ENCODE measurements at regions of chr3 and their contacts with region 1.

Region 1: DNA sequence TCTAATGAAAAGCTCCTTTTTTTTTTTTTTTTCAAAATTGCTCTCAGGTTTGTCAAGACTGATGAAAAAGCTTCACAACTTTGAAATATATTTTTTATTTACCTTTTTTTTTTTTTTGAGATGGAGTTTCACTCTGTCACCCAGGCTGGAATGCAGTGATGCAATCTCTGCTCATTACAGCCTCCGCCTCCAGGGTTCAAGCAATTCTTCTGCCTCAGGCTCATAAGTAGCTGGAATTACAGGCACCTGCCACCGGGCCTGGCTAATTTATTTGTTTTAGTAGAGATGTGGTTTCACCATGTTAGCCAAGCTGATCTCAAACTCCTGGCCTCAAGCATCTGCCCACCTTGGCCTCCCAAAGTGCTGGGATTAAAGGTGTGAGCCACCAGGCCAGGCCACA is 1515.0 kb downstream of the OTOL1 start:
- DNase-seq: peak in 1 of 2 experiments; percentile 16
- H3K4me3 ChIP-seq: no peak overlapping the region
- H3K27ac ChIP-seq: no peak overlapping the region
- H3K4me1 ChIP-seq: no peaks in the 10 kb centered on the region
- H3K27me3 ChIP-seq: no peaks in the 10 kb centered on the region
- CTCF ChIP-seq: no peak

Region 2: DNA sequence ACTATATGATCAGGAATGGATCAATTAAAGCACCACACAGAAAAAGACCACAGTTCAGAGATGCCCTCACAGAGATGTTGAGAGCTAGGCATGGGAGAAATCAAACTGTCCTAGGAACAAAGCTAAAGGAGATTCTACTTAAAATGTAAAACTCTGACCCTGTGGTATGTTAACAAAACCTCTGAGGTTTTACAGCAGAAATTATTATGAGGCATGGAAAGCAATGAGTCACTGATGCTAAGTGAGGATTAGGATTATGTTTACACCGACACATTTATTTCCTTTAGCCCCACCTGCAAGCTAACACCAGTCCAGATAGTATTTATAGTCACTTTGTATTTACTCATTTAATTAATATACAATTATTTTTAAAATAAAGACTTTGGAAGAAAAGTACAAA is 272.8 kb before region 1 on chr3:
- CTCF ChIA-PET with region 1: no interaction called
- POLR2A ChIA-PET with region 1: no interaction called
- intact Hi-C with region 1: no loop called
- DNase-seq: no peak
- H3K4me3 ChIP-seq: no peak overlapping the region
- H3K27ac ChIP-seq: no peak overlapping the region
- H3K4me1 ChIP-seq: no peaks in the 10 kb centered on the region
- H3K27me3 ChIP-seq: no peaks in the 10 kb centered on the region
- CTCF ChIP-seq: no peak

Region 3: DNA sequence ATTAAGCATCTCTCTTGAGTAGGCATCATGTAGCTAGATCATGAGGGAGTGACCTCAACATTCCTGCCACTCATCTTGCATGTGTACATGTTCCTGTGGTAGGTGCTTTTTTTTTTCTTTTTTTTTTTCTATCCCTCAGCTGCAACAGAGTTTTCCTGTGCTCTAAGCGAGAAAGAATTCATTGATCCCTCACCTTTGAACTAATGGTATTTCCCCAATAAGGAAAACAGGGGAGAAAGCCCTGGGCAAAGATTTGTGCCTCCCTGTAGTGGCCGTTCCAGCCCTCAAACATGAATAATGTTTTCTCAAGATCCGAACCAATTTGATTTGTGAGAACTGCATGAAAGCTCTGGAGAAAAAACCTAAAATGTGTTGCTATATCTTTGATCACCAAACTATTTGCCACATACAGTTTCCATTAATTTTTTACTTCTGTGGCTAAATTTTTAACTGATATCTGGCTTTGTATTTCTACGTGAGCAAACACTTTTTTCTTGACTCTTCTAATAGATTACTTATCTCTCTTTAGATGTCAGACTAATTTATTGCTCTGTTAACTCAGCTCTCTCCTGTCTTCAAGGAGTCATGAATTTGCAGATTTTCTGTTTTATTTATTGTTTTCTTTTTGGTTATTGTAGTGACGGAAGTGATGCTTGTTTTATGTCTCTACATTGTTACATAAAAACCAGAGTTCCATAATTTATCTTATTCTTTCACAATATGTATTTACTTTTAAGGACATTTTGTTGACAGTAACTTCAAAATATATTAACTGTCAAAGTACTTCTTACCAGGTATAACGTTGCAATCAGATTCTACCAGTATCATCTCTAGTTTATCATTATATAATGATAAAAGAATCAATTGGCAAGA is 118.4 kb before region 1 on chr3:
- CTCF ChIA-PET with region 1: no interaction called
- POLR2A ChIA-PET with region 1: no interaction called
- intact Hi-C with region 1: no loop called
- DNase-seq: no peak
- H3K4me3 ChIP-seq: no peak overlapping the region
- H3K27ac ChIP-seq: no peak overlapping the region
- H3K4me1 ChIP-seq: no peaks in the 10 kb centered on the region
- H3K27me3 ChIP-seq: no peaks in the 10 kb centered on the region
- CTCF ChIP-seq: no peak

Region 4: GRCh38 chr3:162998205-162998604 is 13.4 kb before region 1 on chr3:
- CTCF ChIA-PET with region 1: no interaction called
- POLR2A ChIA-PET with region 1: no interaction called
- intact Hi-C with region 1: loop called (anchors 1 kb)
- DNase-seq: no peak
- H3K4me3 ChIP-seq: no peak overlapping the region
- H3K27ac ChIP-seq: no peak overlapping the region
- H3K4me1 ChIP-seq: no peaks in the 10 kb centered on the region
- H3K27me3 ChIP-seq: no peaks in the 10 kb centered on the region
- CTCF ChIP-seq: no peak

Measured in PC-9 (cell line).